ENCODE measurements at regions of chr14 and their contacts with region 1.

Region 1: GRCh38 chr14:54566410-54567223 is at the start of gene SAMD4A:
- H3K4me3 Mint-ChIP-seq: peak within 1 kb of the TSS; percentile 91
- H3K27ac Mint-ChIP-seq: peak within 1 kb of the TSS; percentile 83
- H3K4me1 Mint-ChIP-seq: peaks cover 22% of the 10 kb centered on the region
- H3K27me3 Mint-ChIP-seq: peaks cover 48% of the 10 kb centered on the region

Region 2: GRCh38 chr14:54535126-54535525 is 31.5 kb before region 1 on chr14:
- intact Hi-C with region 1: no loop called
- H3K4me3 Mint-ChIP-seq: no peak overlapping the region
- H3K27ac Mint-ChIP-seq: no peak overlapping the region
- H3K4me1 Mint-ChIP-seq: peaks cover 10% of the 10 kb centered on the region
- H3K27me3 Mint-ChIP-seq: no peaks in the 10 kb centered on the region

Region 3: GRCh38 chr14:54642801-54643697 is 76.4 kb after region 1 on chr14:
- intact Hi-C with region 1: loop called (anchors 5 kb)
- H3K4me3 Mint-ChIP-seq: no peak overlapping the region
- H3K27ac Mint-ChIP-seq: peak overlapping the region; percentile 14
- H3K4me1 Mint-ChIP-seq: peaks cover 5% of the 10 kb centered on the region
- H3K27me3 Mint-ChIP-seq: peaks cover 4% of the 10 kb centered on the region

Region 4: DNA sequence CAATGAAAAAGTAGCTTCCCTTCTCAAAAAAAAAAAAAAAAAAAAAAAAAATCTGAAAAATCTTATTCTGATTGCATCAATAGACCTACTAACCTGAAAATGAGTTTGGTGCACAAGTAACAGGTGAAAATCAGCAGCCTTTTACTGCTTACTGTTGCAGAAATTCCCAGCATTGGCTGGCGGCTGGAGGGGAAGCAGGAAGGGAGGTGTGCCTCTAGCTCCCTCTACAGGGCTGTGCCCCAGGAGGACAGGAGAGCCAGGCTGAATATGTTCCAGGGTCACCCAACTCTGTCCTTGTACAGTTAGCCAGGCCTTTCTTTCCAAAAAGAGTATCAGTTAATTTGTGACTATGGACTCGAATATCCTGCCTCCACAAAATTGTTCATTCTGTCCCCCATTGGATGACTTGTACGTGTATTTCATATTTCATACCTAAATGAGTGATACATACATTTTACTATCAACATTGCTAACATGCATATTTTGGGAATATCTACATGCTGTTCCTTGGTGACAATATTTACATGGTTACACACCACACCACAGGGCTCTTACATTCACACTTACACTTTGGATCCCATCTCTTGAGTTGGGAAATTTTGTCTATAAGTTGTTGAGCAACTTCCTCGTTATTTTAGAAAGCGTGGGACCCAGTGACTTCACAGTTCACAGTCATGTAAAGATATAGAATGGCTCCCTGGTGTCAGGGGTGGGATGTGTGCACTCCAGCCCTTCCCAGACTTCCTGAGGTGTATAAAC is 125.1 kb after region 1 on chr14:
- intact Hi-C with region 1: loop called (anchors 1 kb)
- H3K4me3 Mint-ChIP-seq: no peak overlapping the region
- H3K27ac Mint-ChIP-seq: no peak overlapping the region
- H3K4me1 Mint-ChIP-seq: peaks cover 14% of the 10 kb centered on the region
- H3K27me3 Mint-ChIP-seq: peaks cover 13% of the 10 kb centered on the region

Region 5: DNA sequence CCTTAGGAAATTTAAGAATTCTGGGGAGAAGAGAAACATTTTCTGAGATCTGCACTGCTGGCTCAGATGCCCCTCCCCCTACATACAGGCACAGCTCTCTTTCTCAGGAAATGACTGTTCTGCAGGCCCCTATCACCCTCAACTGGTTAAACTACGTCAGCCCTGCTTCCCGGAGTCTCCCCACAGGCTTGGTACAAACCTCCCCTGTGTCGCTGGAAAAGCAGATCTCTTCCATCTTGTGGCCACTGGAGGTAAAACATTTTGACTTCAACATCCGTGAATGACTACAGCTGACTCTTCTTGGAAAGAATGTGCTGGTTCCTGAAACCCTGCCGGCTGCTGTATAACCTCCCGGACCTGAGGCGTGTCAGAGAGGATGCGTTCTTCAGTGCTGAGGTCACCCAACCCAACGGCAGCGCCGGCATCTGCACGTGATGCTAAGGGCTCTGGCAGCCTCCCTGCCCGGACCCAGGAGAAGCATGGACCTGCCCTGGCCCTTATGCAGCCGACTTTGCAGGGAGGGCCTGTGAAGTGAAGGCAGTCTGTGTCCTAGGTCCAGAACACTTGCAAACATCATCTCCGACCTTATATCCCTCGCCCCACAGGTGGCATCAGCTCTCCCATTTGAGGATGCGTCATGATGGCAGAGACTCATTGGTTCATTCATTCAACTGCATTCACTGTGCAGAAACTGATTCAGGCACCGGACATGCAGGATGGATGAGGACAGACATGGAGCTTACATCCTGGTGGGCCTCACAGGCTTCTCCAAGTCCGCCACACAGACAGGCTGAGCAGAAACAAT is 206.8 kb after region 1 on chr14:
- intact Hi-C with region 1: loop called (anchors 1 kb)
- H3K4me3 Mint-ChIP-seq: peak overlapping the region; percentile 57
- H3K27ac Mint-ChIP-seq: peak overlapping the region; percentile 79
- H3K4me1 Mint-ChIP-seq: peaks cover 50% of the 10 kb centered on the region
- H3K27me3 Mint-ChIP-seq: peaks cover 35% of the 10 kb centered on the region

Region 6: GRCh38 chr14:54805521-54806322 is 239.1 kb after region 1 on chr14:
- intact Hi-C with region 1: loop called (anchors 1 kb)
- H3K4me3 Mint-ChIP-seq: no peak overlapping the region
- H3K27ac Mint-ChIP-seq: peak overlapping the region; percentile 68
- H3K4me1 Mint-ChIP-seq: peaks cover 9% of the 10 kb centered on the region
- H3K27me3 Mint-ChIP-seq: peaks cover 22% of the 10 kb centered on the region

Region 7: GRCh38 chr14:54893151-54893760 is 326.6 kb after region 1 on chr14:
- intact Hi-C with region 1: loop called (anchors 5 kb)
- H3K4me3 Mint-ChIP-seq: no peak overlapping the region
- H3K27ac Mint-ChIP-seq: no peak overlapping the region
- H3K4me1 Mint-ChIP-seq: peaks cover 40% of the 10 kb centered on the region
- H3K27me3 Mint-ChIP-seq: no peaks in the 10 kb centered on the region

Region 8: DNA sequence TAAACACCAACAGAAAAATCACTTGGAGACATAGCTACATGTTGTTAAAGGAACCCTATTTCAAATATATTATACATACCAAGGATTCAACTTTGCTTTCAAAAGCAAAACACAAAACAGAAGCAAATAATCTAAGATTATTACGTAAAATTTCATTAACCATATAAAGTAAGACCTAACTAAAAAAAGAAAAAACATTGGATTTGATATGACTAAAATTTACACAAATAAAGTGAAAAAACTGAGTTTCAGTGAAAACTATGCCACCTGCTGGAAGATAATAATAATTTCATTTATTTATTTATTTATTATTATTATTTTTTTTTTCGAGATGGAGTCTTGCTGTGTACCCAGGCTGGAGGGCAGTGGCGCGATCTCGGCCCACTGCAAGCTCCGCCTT is 415.1 kb after region 1 on chr14:
- intact Hi-C with region 1: loop called (anchors 2 kb)
- H3K4me3 Mint-ChIP-seq: no peak overlapping the region
- H3K27ac Mint-ChIP-seq: no peak overlapping the region
- H3K4me1 Mint-ChIP-seq: no peaks in the 10 kb centered on the region
- H3K27me3 Mint-ChIP-seq: no peaks in the 10 kb centered on the region